Calu3 (cell line): ENCODE measurements at regions of chr9 and their contacts with region 1.

Region 1: GRCh38 chr9:76987594-76988200 is 31.8 kb upstream of the FOXB2 start:
- DNase-seq: peak; percentile 46
- H3K4me3 Mint-ChIP-seq: no peak overlapping the region
- H3K27ac Mint-ChIP-seq: no peak overlapping the region
- H3K4me1 Mint-ChIP-seq: no peaks in the 10 kb centered on the region
- H3K27me3 Mint-ChIP-seq: peaks cover 34% of the 10 kb centered on the region
- CTCF ChIP-seq: no peak

Region 2: DNA sequence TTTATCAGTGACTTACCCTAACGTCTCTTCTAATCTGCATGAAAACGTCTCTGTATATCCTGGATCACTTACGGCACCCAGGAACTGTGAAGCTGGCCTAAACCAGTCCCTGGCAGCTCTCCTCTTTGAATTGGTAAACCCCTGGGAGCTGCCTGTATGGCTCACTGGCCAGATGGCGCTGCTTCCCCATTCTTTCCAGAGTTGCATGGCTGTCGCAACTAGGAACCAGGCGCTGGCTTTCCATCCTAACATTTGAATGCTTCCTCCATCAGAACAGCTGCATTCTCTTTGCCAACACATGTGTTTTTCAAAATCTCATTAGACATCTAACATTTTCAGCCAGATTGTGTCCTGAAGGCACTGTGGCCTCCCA is 231.4 kb before region 1 on chr9:
- CTCF ChIA-PET with region 1: no interaction called
- intact Hi-C with region 1: loop called (anchors 5 kb)
- DNase-seq: peak; percentile 11
- H3K4me3 Mint-ChIP-seq: no peak overlapping the region
- H3K27ac Mint-ChIP-seq: no peak overlapping the region
- H3K4me1 Mint-ChIP-seq: no peaks in the 10 kb centered on the region
- H3K27me3 Mint-ChIP-seq: peaks cover 15% of the 10 kb centered on the region
- CTCF ChIP-seq: no peak

Region 3: GRCh38 chr9:77663754-77664153 is 676.1 kb after region 1 on chr9:
- CTCF ChIA-PET with region 1: no interaction called
- intact Hi-C with region 1: no loop called
- DNase-seq: peak; percentile 64
- H3K4me3 Mint-ChIP-seq: no peak overlapping the region
- H3K27ac Mint-ChIP-seq: peak overlapping the region; percentile 19
- H3K4me1 Mint-ChIP-seq: peaks cover 27% of the 10 kb centered on the region
- H3K27me3 Mint-ChIP-seq: no peaks in the 10 kb centered on the region
- CTCF ChIP-seq: no peak